ENCODE measurements at regions of chr4 and their contacts with region 1.

Region 1: GRCh38 chr4:81405894-81406401 is 65.8 kb downstream of the RASGEF1B start:
- DNase-seq: no peak
- ATAC-seq: peak; percentile 92

Region 2: DNA sequence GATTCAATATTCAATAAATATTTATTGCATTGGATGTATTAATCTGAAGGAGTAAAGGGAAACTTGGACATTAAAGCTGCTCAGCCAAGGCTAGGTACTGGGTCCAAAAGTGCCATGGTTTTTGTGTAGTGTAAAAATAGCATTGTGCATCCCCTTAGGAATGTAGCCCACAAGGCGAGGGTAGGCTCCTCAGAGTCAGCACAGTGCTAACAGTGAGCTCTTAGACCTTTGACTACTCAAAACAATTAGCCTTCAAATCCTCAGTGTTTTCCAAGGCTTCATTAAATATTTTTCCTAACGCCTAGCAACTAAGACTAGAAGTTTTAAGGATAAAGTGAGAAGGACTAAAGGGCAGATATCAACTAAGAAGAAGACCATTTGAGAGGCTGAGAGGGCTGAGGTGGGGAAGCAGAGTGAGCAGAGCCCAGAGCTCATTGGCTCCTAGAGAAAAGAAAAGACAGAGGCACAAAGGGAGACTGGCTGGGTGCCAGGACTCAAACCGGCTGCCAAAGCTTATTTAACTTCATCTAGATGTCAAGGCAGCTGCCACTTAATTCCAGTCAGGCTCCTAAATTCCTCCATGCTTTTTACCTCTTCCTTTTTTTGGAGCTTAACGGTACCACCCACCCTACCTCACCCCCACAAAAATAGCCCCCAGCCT is 208.0 kb before region 1 on chr4:
- intact Hi-C with region 1: no loop called
- DNase-seq: no peak
- ATAC-seq: no peak

Region 3: GRCh38 chr4:81314196-81314896 is 91.6 kb before region 1 on chr4:
- intact Hi-C with region 1: no loop called
- DNase-seq: no peak
- ATAC-seq: no peak

Region 4: DNA sequence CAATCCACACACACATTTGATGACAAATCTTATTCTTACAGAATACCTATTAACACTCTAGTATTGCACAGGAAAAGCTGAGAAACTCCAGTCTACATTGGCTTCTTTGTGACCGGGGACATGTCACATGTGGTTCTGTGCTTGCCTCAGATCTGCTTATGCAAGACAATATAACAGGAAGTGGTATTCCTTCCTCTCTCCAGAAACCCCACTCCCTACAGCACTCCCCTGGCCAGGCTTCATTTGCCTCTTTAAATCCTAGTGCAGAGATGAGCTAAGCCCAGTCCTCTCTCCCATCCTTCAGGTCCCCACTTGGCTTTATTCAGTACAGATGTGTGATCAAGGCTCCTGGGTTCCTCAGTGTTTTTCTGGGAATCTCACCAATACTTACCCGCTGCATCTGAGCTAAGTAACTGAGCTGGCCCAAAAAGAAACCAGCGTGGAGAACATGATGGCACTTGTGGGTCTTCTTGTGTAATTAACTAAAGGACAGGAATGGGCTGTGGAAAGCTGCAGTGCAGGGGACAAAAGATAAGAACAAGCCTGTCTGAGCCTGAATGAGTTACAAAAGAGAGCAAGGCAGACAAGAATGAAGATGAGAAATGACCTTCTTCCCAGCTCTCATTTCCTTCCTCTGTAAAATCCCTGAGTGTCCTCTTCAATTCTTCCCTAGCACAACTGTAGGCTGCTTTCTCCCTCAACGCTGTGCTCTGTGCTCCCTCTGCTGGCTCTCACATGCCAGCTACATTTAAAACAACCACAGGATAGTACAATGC is 862.3 kb after region 1 on chr4:
- intact Hi-C with region 1: loop called (anchors 10 kb)
- DNase-seq: peak; percentile 72
- ATAC-seq: peak; percentile 97

Measured in sciatic nerve (tissue), 2 donors.